Naive thymus-derived CD4-positive, alpha-beta T cell (primary cell): ENCODE measurements at regions of chr19 and their contacts with region 1.

Region 1: GRCh38 chr19:3762501-3763459 is at the start of gene MRPL54:
- DNase-seq: peak; percentile 98 to 100 (median 100)
- ATAC-seq: peak; percentile 89
- H3K4me3 ChIP-seq: peak within 1 kb of the TSS; percentile 96
- H3K4me3 Mint-ChIP-seq: peak within 1 kb of the TSS; percentile 93 to 99 (median 98)
- H3K27ac ChIP-seq: peak within 1 kb of the TSS; percentile 100
- H3K27ac Mint-ChIP-seq: peak within 1 kb of the TSS; percentile 99 to 100 (median 100)
- H3K4me1 ChIP-seq: peaks cover 19 to 44% of the 10 kb centered on the region in 2 donors
- H3K4me1 Mint-ChIP-seq: peaks cover 23 to 59% (median 39%) of the 10 kb centered on the region in 7 donors
- H3K27me3 ChIP-seq: no peaks in the 10 kb centered on the region
- H3K27me3 Mint-ChIP-seq: peaks cover 0 to 5% (median 0%) of the 10 kb centered on the region in 5 donors
- total RNA-seq, gene MRPL54: 34.0 to 95.2 (median 58.8) TPM

Region 2: GRCh38 chr19:3185482-3186376 is 577.1 kb before region 1 on chr19 and contains the start of gene NCLN:
- CTCF ChIA-PET with region 1: no interaction called
- POLR2A ChIA-PET with region 1: interaction called, 3 read pairs
- intact Hi-C with region 1: loop called (anchors 2 to 5 kb)
- DNase-seq: peak; percentile 92 to 98 (median 95)
- ATAC-seq: peak; percentile 94
- H3K4me3 ChIP-seq: peak within 1 kb of the TSS; percentile 71
- H3K4me3 Mint-ChIP-seq: peak within 1 kb of the TSS; percentile 86 to 99 (median 94)
- H3K27ac ChIP-seq: peak within 1 kb of the TSS; percentile 74
- H3K27ac Mint-ChIP-seq: peak within 1 kb of the TSS; percentile 89 to 99 (median 91)
- H3K4me1 ChIP-seq: peaks cover 53 to 63% of the 10 kb centered on the region in 2 donors
- H3K4me1 Mint-ChIP-seq: peaks cover 43 to 66% (median 54%) of the 10 kb centered on the region in 7 donors
- H3K27me3 ChIP-seq: no peaks in the 10 kb centered on the region
- H3K27me3 Mint-ChIP-seq: peaks cover 0 to 2% (median 0%) of the 10 kb centered on the region in 5 donors
- total RNA-seq, gene NCLN: 45.4 to 64.7 (median 53.7) TPM

Region 3: GRCh38 chr19:3626473-3627350 is 136.1 kb before region 1 on chr19 and contains the start of gene CACTIN:
- CTCF ChIA-PET with region 1: no interaction called
- POLR2A ChIA-PET with region 1: interaction called, 3 read pairs
- intact Hi-C with region 1: loop called (anchors 1 to 2 kb)
- DNase-seq: peak; percentile 97 to 100 (median 99)
- ATAC-seq: peak; percentile 99
- H3K4me3 ChIP-seq: peak within 1 kb of the TSS; percentile 73
- H3K4me3 Mint-ChIP-seq: peak within 1 kb of the TSS; percentile 85 to 98 (median 94)
- H3K27ac ChIP-seq: peak within 1 kb of the TSS; percentile 81
- H3K27ac Mint-ChIP-seq: peak within 1 kb of the TSS; percentile 94 to 100 (median 99)
- H3K4me1 ChIP-seq: peaks cover 8 to 16% of the 10 kb centered on the region in 2 donors
- H3K4me1 Mint-ChIP-seq: peaks cover 23 to 43% (median 27%) of the 10 kb centered on the region in 7 donors
- H3K27me3 ChIP-seq: no peaks in the 10 kb centered on the region
- H3K27me3 Mint-ChIP-seq: no peaks in the 10 kb centered on the region
- total RNA-seq, gene CACTIN: 35.4 to 46.7 (median 37.1) TPM

Region 4: DNA sequence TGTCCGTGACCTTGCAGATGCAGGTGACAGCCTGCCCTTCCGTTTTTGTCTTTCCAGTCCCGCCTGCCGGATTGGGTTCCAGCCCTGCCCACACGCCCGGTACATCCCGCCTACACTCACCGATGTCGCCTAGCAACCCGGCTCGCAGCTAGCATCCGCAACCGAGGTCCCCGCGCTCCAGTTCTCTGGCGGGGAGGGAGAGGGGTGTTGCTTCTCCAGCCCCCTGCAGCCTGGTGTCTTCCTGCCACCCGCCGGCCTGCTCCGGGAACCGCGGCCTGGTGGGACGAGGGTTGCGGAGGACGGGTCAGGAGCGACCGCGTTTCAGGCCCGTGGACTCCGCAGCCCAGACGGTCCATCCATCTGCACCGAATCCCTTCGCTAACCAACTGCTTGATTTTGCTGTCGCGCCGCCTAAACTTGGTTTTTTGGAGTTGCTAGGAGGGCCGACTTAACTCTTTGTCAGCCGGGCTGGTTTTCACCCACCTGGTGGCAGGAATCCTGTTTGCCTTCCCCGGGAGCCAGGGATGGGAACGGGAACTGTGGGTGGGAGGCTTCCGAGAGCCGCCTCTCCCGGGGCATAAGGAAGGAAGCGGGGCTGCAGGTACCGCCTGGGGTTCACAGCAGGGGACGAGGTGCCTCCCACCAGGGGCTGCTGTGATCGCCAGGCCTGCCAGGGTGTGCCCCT is 38.8 kb after region 1 on chr19:
- CTCF ChIA-PET with region 1: interaction called, 3 read pairs
- POLR2A ChIA-PET with region 1: interaction called, 16 read pairs
- intact Hi-C with region 1: no loop called
- DNase-seq: peak in 8 of 9 donors; percentile 42 to 70 (median 56)
- ATAC-seq: peak; percentile 81
- H3K4me3 ChIP-seq: peak overlapping the region; percentile 34
- H3K4me3 Mint-ChIP-seq: peak overlapping the region; percentile 56 to 77 (median 73)
- H3K27ac ChIP-seq: no peak overlapping the region
- H3K27ac Mint-ChIP-seq: peak overlapping the region in 4 of 9 donors; percentile 17 to 75 (median 42)
- H3K4me1 ChIP-seq: peaks cover 12 to 32% of the 10 kb centered on the region in 2 donors
- H3K4me1 Mint-ChIP-seq: peaks cover 16 to 51% (median 30%) of the 10 kb centered on the region in 7 donors
- H3K27me3 ChIP-seq: no peaks in the 10 kb centered on the region
- H3K27me3 Mint-ChIP-seq: peaks cover 0 to 7% (median 0%) of the 10 kb centered on the region in 5 donors

Region 5: GRCh38 chr19:3984908-3985642 is 222.3 kb after region 1 on chr19 and contains the start of gene EEF2:
- CTCF ChIA-PET with region 1: interaction called, 7 read pairs
- POLR2A ChIA-PET with region 1: interaction called, 19 read pairs
- intact Hi-C with region 1: loop called in 1 of 2 experiments (anchors 5 kb)
- DNase-seq: peak; percentile 89 to 96 (median 93)
- ATAC-seq: peak; percentile 72
- H3K4me3 ChIP-seq: peak within 1 kb of the TSS; percentile 98
- H3K4me3 Mint-ChIP-seq: peak within 1 kb of the TSS; percentile 91 to 99 (median 98)
- H3K27ac ChIP-seq: peak within 1 kb of the TSS; percentile 87
- H3K27ac Mint-ChIP-seq: peak within 1 kb of the TSS; percentile 93 to 99 (median 96)
- H3K4me1 ChIP-seq: peaks cover 37 to 43% of the 10 kb centered on the region in 2 donors
- H3K4me1 Mint-ChIP-seq: peaks cover 30 to 57% (median 48%) of the 10 kb centered on the region in 7 donors
- H3K27me3 ChIP-seq: no peaks in the 10 kb centered on the region
- H3K27me3 Mint-ChIP-seq: no peaks in the 10 kb centered on the region
- total RNA-seq, gene EEF2: 1,791 to 2,674 (median 2,346) TPM

Region 6: GRCh38 chr19:4199699-4200293 is 437.0 kb after region 1 on chr19:
- CTCF ChIA-PET with region 1: no interaction called
- POLR2A ChIA-PET with region 1: no interaction called
- intact Hi-C with region 1: loop called in 1 of 2 experiments (anchors 5 kb)
- DNase-seq: no peak
- ATAC-seq: no peak
- H3K4me3 ChIP-seq: no peak overlapping the region
- H3K4me3 Mint-ChIP-seq: no peak overlapping the region
- H3K27ac ChIP-seq: no peak overlapping the region
- H3K27ac Mint-ChIP-seq: no peak overlapping the region
- H3K4me1 ChIP-seq: no peaks in the 10 kb centered on the region
- H3K4me1 Mint-ChIP-seq: peaks cover 11 to 21% (median 15%) of the 10 kb centered on the region in 7 donors
- H3K27me3 ChIP-seq: peaks cover 0 to 20% of the 10 kb centered on the region in 2 donors
- H3K27me3 Mint-ChIP-seq: peaks cover 34 to 49% (median 36%) of the 10 kb centered on the region in 5 donors